ENCODE measurements at regions of chrX and their contacts with region 1.

Region 1: GRCh38 chrX:149504915-149505651 is at the start of gene IDS:
- DNase-seq: peak; percentile 61 to 92
- H3K4me3 ChIP-seq: peak within 1 kb of the TSS; percentile 61 to 63
- H3K27ac ChIP-seq: peak within 1 kb of the TSS; percentile 73 to 89
- H3K4me1 ChIP-seq: no peaks in the 10 kb centered on the region
- H3K27me3 ChIP-seq: no peaks in the 10 kb centered on the region
- CTCF ChIP-seq: no peak
- total RNA-seq, gene IDS: 82.7 TPM

Region 2: DNA sequence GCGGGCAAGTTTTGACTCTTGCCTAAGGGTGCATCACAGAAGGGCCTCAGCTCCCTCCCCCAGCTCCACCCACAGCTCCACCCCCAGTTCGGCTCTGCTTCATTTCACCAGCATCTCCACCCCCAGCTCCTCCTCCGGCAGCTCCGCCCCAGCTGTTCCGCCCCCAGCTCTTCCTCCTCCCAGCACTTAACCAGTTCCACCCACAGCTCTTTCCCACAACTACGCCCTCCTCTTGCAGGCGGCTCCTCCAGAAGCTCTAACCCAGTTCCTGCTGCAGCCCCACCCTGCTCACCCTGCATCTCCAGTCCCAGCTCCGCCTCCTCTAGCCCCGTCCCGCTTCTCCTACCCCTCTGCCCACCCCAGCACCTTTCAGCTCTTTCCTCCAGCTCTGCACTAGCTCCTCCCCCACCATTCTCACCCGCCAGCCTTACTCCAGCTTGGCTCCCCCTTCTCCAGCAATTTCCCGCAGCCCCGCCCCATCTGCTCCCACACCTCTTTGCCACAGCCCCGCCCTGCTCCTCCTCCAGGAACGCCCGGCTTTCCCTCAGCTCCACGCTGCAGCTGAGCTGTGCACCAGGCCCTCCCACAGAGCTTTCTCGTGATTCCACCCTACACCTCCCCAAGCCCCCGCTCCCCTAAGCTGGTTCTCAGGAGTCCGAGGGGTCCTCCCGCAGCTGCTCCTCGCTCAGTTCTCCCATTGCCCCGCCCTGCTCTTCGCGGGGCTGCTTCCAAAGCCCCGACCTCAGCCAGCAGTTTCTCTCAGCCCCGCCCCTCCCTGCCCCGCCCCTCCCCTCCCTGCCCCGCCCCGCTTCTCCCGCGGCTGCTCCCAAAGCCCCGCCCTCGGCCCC is 34.4 kb after region 1 on chrX:
- intact Hi-C with region 1: loop called (anchors 2 kb)
- DNase-seq: peak; percentile 71 to 92
- H3K4me3 ChIP-seq: peak overlapping the region; percentile 48 to 74
- H3K27ac ChIP-seq: peak overlapping the region; percentile 43 to 84
- H3K4me1 ChIP-seq: no peaks in the 10 kb centered on the region
- H3K27me3 ChIP-seq: no peaks in the 10 kb centered on the region
- CTCF ChIP-seq: no peak

Region 3: DNA sequence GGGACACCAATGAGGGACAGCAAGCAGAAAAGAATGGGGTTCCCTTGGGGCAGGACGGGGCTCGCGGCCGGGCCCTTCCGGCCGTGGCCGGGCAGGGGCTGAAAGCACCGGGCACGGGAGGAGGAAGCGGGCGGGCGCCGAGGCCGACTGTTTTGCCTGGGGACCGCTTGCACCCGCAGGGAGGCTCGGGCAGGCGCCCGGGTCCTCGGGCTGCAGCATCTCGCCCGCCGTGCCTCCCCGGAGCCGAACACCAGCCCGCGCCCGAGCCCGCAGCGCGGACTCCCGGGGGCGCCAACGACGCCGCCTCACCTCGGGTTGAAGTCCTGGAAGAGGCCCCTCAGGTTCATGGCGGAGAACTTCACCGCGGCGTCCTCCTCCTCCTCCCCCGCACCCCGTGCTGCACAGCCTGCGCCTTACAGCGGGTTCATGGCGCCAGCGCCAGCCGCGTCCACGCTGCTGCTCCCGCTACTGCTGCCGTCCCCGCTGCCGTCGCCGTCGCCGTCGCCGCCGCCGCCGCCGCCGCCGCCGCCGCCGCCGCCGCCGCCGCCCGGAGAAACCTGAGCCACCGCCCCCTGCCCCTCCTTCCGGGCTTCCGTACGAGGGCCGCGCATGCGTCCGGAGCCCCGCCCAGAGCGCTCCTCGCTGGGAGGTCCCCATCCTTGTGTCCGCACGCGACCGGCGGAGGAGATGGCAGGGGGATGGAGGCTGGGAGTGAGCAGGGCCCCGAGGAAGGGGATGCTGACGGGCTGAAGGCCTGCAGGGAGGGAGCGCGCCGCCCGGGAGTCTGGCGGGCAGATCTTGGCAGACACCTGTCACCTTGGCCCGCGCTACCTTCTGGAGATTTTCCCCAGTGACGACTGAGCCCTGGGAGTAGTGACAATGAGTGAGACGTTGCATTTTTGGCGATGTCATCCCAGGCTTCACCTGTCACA is 126.4 kb after region 1 on chrX and contains the start of gene TMEM185A:
- intact Hi-C with region 1: loop called (anchors 10 kb)
- DNase-seq: peak in 1 of 2 donors; percentile 78
- H3K4me3 ChIP-seq: peak within 1 kb of the TSS; percentile 59 to 85
- H3K27ac ChIP-seq: peak within 1 kb of the TSS; percentile 38 to 45
- H3K4me1 ChIP-seq: no peaks in the 10 kb centered on the region
- H3K27me3 ChIP-seq: no peaks in the 10 kb centered on the region
- CTCF ChIP-seq: no peak
- total RNA-seq, gene TMEM185A: 12.6 TPM

Measured in ascending aorta (tissue), 2 donors.